Heart left ventricle (tissue), 16 donors: ENCODE measurements at regions of chr17 and their contacts with region 1.

Region 1: GRCh38 chr17:60142872-60143499 is 6.8 kb upstream of the CA4 start:
- DNase-seq: peak; percentile 80 to 87 (median 86)
- ATAC-seq: peak; percentile 58 to 87 (median 76)
- H3K4me3 ChIP-seq: peak overlapping the region in 5 of 12 donors; percentile 3 to 35 (median 15)
- H3K27ac ChIP-seq: peak overlapping the region in 8 of 12 donors; percentile 22 to 63 (median 49)
- H3K4me1 ChIP-seq: peaks cover 4 to 49% (median 34%) of the 10 kb centered on the region in 12 donors
- H3K27me3 ChIP-seq: peaks cover 23 to 72% (median 62%) of the 10 kb centered on the region in 9 donors
- CTCF ChIP-seq: peak; percentile 59 to 83 (median 72)
- POLR2A ChIP-seq: no peak

Region 2: DNA sequence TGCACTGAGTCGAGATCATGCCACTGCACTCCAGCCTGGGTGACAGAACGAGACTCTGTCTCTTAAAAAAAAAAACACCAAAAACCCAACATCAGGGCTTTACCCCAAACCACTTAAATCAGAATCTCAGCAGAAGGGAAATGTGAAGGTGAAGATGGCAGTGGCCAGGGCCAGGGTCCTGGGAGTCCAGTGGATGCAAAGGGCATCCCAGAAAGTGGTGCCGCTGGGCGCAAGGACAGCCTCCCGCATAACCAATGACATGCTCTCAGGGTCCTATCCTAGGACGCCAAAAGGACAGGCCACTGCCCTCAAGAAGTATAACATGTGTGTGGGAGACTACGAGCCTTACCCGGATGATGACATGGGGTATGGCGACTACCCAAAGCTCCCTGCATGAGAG is 258.1 kb before region 1 on chr17:
- intact Hi-C with region 1: no loop called
- DNase-seq: no peak
- ATAC-seq: no peak
- H3K4me3 ChIP-seq: no peak overlapping the region
- H3K27ac ChIP-seq: no peak overlapping the region
- H3K4me1 ChIP-seq: no peaks in the 10 kb centered on the region
- H3K27me3 ChIP-seq: no peaks in the 10 kb centered on the region
- CTCF ChIP-seq: no peak
- POLR2A ChIP-seq: no peak

Region 3: GRCh38 chr17:59941131-59941530 is 201.9 kb before region 1 on chr17:
- intact Hi-C with region 1: no loop called
- DNase-seq: no peak
- ATAC-seq: no peak
- H3K4me3 ChIP-seq: no peak overlapping the region
- H3K27ac ChIP-seq: no peak overlapping the region
- H3K4me1 ChIP-seq: no peaks in the 10 kb centered on the region
- H3K27me3 ChIP-seq: no peaks in the 10 kb centered on the region
- CTCF ChIP-seq: no peak
- POLR2A ChIP-seq: no peak

Region 4: GRCh38 chr17:60065136-60065535 is 77.8 kb before region 1 on chr17:
- intact Hi-C with region 1: no loop called
- DNase-seq: no peak
- ATAC-seq: no peak
- H3K4me3 ChIP-seq: no peak overlapping the region
- H3K27ac ChIP-seq: no peak overlapping the region
- H3K4me1 ChIP-seq: no peaks in the 10 kb centered on the region
- H3K27me3 ChIP-seq: no peaks in the 10 kb centered on the region
- CTCF ChIP-seq: no peak
- POLR2A ChIP-seq: no peak

Region 5: DNA sequence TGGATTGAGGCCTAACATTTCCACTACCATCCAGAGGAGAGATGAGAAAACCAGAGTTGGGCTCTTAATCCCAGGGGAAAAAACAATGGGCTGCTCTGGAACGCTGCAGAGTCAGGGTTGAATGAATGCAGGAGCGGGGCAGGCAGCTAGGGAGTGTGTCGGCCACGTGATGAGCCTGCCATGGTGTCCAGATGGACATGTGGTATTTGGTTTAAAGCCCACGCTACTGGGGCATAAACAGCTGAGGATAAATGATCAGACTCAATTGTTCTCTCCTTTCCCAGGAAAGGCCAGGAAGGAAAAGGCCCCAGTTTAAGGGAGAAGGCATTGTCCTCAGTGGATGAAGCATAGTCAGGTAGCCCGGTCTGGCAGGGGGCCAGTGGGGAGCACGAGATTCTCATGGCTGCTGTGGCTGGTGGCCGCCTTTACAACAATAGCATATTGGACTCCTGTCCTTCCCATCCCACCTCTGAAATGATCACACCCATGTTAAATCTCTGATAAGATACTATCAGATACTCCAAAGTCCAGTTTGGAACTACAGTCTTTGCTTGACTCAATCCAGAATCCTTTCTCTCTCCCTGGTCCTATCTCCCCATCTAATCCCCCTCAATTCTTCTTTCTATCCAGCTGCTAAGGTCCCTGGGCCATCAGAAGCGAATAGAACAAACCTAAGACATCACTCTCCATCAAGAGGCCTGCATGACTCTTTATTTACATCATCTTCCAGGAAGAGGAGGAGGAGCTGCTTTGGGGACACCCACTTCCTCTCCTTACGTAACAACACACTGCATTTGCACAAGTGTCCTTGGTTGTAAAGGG is 27.1 kb after region 1 on chr17:
- intact Hi-C with region 1: loop called in 4 of 10 experiments (anchors 1 to 2 kb)
- DNase-seq: peak; percentile 64 to 82 (median 78)
- ATAC-seq: peak; percentile 49 to 85 (median 68)
- H3K4me3 ChIP-seq: no peak overlapping the region
- H3K27ac ChIP-seq: peak overlapping the region in 10 of 12 donors; percentile 12 to 82 (median 65)
- H3K4me1 ChIP-seq: peaks cover 0 to 69% (median 24%) of the 10 kb centered on the region in 12 donors
- H3K27me3 ChIP-seq: no peaks in the 10 kb centered on the region
- CTCF ChIP-seq: no peak
- POLR2A ChIP-seq: no peak

Region 6: DNA sequence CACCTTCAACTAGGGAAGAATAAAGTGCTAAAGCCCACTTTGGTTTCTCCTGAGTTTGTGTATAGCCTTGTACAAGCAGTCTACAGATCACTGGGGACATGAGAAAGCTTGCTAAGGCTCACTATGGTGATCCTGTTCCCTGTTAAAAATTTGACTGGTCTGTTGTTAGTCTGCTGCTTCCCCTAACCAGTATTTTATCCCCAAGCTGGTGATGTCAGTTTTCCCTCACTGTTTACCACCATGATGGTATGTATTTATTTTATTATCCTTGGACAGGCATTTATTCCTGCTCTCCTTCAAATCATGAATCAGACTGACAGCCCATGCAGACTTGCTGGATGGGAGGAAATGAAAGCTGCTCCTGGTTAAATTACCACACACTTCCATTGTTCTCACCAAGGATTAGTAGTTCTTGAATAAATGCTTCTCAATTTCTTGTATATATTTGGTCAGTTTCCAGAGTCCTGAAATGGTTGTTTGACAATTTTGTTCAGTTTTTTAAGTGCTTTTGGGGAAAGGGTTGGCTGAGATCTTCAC is 106.4 kb after region 1 on chr17:
- intact Hi-C with region 1: no loop called
- DNase-seq: no peak
- ATAC-seq: no peak
- H3K4me3 ChIP-seq: no peak overlapping the region
- H3K27ac ChIP-seq: no peak overlapping the region
- H3K4me1 ChIP-seq: no peaks in the 10 kb centered on the region
- H3K27me3 ChIP-seq: no peaks in the 10 kb centered on the region
- CTCF ChIP-seq: no peak
- POLR2A ChIP-seq: no peak